Activated CD8-positive, alpha-beta memory T cell treated with anti-CD3 and anti-CD28 coated beads, Interleukin-2, amount 10 ng/mL, durations not matched to agents 7 days and 5 days (primary cell): ENCODE measurements at regions of chr7 and their contacts with region 1.

Region 1: GRCh38 chr7:6577365-6578113 is at the start of gene ZDHHC4:
- DNase-seq: peak; percentile 92
- ATAC-seq: peak; percentile 97
- H3K4me3 Mint-ChIP-seq: peak within 1 kb of the TSS; percentile 80
- H3K27ac Mint-ChIP-seq: peak within 1 kb of the TSS; percentile 89
- H3K4me1 Mint-ChIP-seq: peaks cover 34% of the 10 kb centered on the region
- H3K27me3 Mint-ChIP-seq: no peaks in the 10 kb centered on the region
- total RNA-seq, gene ZDHHC4: 30.1 to 33.2 TPM

Region 2: GRCh38 chr7:6489612-6490011 is 87.9 kb before region 1 on chr7:
- CTCF ChIA-PET with region 1: no interaction called
- DNase-seq: no peak
- ATAC-seq: no peak
- H3K4me3 Mint-ChIP-seq: no peak overlapping the region
- H3K27ac Mint-ChIP-seq: no peak overlapping the region
- H3K4me1 Mint-ChIP-seq: peaks cover 4% of the 10 kb centered on the region
- H3K27me3 Mint-ChIP-seq: peaks cover 3% of the 10 kb centered on the region

Region 3: DNA sequence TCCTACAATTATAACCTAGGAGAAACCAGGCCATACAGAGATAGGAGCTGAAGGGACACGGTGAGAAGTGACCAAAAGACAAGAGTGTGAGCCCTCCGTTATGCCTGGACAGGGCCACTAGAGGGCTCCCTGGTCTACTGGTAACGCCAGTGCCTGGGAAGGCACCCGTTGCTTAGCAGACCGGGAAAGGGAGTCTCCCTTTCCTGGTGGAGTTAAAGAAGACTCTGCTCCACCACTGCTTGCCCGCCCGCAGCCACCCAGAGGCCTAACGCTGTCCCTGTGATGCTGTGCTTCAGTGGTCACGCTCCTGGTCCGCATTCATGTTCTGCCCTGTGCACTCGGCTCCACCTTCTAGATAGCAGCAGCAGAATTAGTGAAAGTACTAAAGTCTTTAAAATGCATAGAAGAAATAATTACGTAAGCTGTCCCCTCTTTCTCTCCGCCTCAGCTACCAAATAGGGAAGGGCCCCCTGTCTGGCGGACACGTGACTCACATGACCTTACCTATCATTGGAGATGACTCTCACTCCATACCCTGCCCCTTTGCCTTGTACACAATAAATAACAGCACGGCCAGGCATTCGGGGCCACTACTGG is 61.1 kb before region 1 on chr7:
- CTCF ChIA-PET with region 1: interaction called, 13 read pairs
- DNase-seq: peak; percentile 81
- ATAC-seq: peak; percentile 81
- H3K4me3 Mint-ChIP-seq: peak overlapping the region; percentile 70
- H3K27ac Mint-ChIP-seq: no peak overlapping the region
- H3K4me1 Mint-ChIP-seq: peaks cover 7% of the 10 kb centered on the region
- H3K27me3 Mint-ChIP-seq: peaks cover 5% of the 10 kb centered on the region

Region 4: GRCh38 chr7:6558837-6559236 is 18.7 kb before region 1 on chr7:
- CTCF ChIA-PET with region 1: interaction called, 14 read pairs
- DNase-seq: no peak
- ATAC-seq: peak; percentile 33
- H3K4me3 Mint-ChIP-seq: no peak overlapping the region
- H3K27ac Mint-ChIP-seq: no peak overlapping the region
- H3K4me1 Mint-ChIP-seq: peaks cover 6% of the 10 kb centered on the region
- H3K27me3 Mint-ChIP-seq: no peaks in the 10 kb centered on the region

Region 5: GRCh38 chr7:6589829-6590644 is 12.5 kb after region 1 on chr7 and contains the start of gene INTS15:
- CTCF ChIA-PET with region 1: interaction called, 60 read pairs
- DNase-seq: peak; percentile 83
- ATAC-seq: peak; percentile 92
- H3K4me3 Mint-ChIP-seq: peak within 1 kb of the TSS; percentile 86
- H3K27ac Mint-ChIP-seq: peak within 1 kb of the TSS; percentile 80
- H3K4me1 Mint-ChIP-seq: peaks cover 26% of the 10 kb centered on the region
- H3K27me3 Mint-ChIP-seq: no peaks in the 10 kb centered on the region
- total RNA-seq, gene INTS15: 40.4 to 42.4 TPM

Region 6: DNA sequence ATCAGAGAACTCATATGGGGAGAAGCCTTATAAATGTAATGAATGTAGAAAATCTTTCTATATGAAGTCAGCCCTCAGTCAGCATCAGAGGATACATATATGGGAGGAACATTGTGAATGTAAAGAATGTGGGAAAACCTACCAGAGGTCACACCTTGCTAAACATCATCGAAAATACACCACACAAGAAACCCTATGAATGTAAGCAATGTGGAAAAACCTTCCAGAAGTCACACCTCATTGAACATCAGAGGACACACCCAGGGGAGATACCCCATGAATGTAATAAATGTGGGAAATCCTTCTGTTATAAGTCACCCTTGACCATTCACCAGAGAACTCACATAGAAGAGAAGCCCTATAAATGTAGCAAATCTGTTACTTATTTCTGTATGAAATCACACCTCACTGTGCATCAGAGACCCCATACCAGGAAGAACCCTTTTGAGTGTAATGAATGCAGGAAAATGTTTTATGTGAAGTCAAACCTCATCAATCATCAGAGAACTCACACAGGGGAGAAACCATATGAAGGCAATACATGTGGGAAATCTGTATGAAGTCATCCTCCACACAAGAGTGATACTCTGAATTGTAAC is 98.4 kb after region 1 on chr7:
- CTCF ChIA-PET with region 1: no interaction called
- DNase-seq: no peak
- ATAC-seq: no peak
- H3K4me3 Mint-ChIP-seq: no peak overlapping the region
- H3K27ac Mint-ChIP-seq: no peak overlapping the region
- H3K4me1 Mint-ChIP-seq: no peaks in the 10 kb centered on the region
- H3K27me3 Mint-ChIP-seq: no peaks in the 10 kb centered on the region

Region 7: GRCh38 chr7:6706677-6707544 is 129.4 kb after region 1 on chr7 and contains the start of gene ZNF12:
- CTCF ChIA-PET with region 1: no interaction called
- DNase-seq: peak; percentile 97
- ATAC-seq: peak; percentile 96
- H3K4me3 Mint-ChIP-seq: peak within 1 kb of the TSS; percentile 95
- H3K27ac Mint-ChIP-seq: peak within 1 kb of the TSS; percentile 90
- H3K4me1 Mint-ChIP-seq: peaks cover 33% of the 10 kb centered on the region
- H3K27me3 Mint-ChIP-seq: no peaks in the 10 kb centered on the region
- total RNA-seq, gene ZNF12: 17.3 to 25.1 TPM